IMR-90 (cell line): ENCODE measurements at regions of chr4 and their contacts with region 1.

Region 1: DNA sequence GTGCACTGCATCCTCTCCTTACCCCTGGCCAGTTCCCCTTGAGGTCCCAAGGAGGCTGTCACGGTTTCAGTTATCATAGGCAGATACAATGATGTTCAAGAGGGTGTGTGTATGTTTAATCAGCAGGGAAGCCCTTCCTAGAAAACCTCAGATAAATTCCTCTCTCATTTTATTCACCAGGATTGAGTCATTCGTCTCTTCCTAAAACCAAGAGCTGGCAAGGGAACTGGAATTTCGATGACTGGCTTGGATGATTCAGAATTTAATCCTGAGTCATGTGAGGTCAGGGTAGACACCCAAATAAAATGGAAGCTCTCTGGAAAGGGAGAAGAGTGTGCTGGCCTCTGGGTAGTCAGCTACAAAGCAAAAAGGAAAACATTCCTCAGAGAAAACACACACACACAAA is 106.2 kb upstream of the RAPGEF2 start:
- DNase-seq: peak; percentile 97
- ATAC-seq: peak; percentile 99
- H3K4me3 ChIP-seq: no peak overlapping the region
- H3K27ac ChIP-seq: no peak overlapping the region
- H3K4me1 ChIP-seq: peaks cover 2% of the 10 kb centered on the region
- H3K27me3 ChIP-seq: no peaks in the 10 kb centered on the region
- CTCF ChIP-seq: no peak
- POLR2A ChIP-seq: no peak
- RAD21 ChIP-seq: peak; percentile 29; the same call in 1 of the 2 replicates

Region 2: GRCh38 chr4:158873795-158874401 is 122.8 kb before region 1 on chr4:
- CTCF ChIA-PET with region 1: no interaction called
- POLR2A ChIA-PET with region 1: no interaction called
- dilution Hi-C with region 1: no loop called
- in situ Hi-C with region 1: no loop called
- intact Hi-C with region 1: loop called (anchors 5 kb)
- DNase-seq: peak; percentile 96
- ATAC-seq: peak; percentile 97
- H3K4me3 ChIP-seq: no peak overlapping the region
- H3K27ac ChIP-seq: no peak overlapping the region
- H3K4me1 ChIP-seq: peaks cover 10% of the 10 kb centered on the region
- H3K27me3 ChIP-seq: no peaks in the 10 kb centered on the region
- CTCF ChIP-seq: no peak
- POLR2A ChIP-seq: no peak
- RAD21 ChIP-seq: no peak; the same call in 1 of the 2 replicates

Region 3: DNA sequence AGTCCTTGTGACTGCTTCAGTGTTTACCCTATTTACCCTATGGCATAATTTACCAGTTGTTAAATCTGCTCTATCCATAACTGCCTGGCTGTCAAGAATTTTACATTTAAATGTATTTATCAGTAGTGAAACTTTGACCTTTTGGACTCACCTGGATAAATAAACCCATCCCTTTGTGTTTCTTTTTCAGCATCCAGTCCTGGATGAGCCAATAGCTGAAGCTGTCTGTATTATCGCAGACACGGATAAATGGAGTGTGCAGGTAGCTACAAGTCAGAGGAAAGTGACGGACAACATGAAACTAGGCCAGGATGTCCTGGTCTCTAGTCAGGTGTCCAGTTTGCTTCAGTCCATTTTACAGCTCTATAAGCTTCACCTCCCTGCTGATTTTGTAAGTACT is 105.4 kb before region 1 on chr4:
- CTCF ChIA-PET with region 1: no interaction called
- POLR2A ChIA-PET with region 1: no interaction called
- dilution Hi-C with region 1: no loop called
- in situ Hi-C with region 1: no loop called
- intact Hi-C with region 1: no loop called
- DNase-seq: no peak
- ATAC-seq: no peak
- H3K4me3 ChIP-seq: no peak overlapping the region
- H3K27ac ChIP-seq: no peak overlapping the region
- H3K4me1 ChIP-seq: peaks cover 6% of the 10 kb centered on the region
- H3K27me3 ChIP-seq: no peaks in the 10 kb centered on the region
- CTCF ChIP-seq: no peak
- POLR2A ChIP-seq: no peak
- RAD21 ChIP-seq: no peak

Region 4: DNA sequence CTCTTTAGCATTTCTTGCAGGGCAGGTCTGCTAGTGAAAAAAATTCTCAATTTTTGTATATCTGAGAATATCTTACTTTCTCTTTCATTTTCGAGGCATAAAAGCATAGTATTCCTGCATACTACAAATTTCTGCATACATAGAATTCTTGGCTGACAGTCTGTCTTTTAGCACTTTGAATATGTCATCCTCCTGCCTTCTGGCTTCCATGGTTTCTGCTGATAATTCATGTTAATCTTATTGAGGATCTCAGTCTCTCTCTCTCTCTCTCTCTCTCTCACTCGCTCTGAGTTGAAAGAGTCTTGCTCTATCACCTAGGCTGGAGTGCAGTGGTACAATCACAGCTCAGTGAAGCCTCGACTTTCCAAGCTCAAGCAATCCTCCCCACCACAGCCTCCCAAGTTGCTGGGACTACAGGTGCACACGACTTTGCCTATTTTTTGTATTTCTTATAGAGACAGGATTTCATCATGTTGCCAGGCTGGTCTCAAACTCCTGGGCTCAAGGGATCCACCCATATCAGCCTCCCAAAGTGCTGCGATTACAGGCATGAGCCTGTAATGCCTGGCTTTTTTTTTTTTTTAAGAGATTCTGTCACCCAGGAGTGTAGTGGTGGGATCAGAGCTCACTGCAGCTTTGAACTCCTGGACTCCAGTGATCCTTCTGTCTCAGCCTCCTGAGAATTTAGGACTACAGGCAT is 66.6 kb before region 1 on chr4:
- CTCF ChIA-PET with region 1: no interaction called
- POLR2A ChIA-PET with region 1: no interaction called
- dilution Hi-C with region 1: no loop called
- in situ Hi-C with region 1: no loop called
- intact Hi-C with region 1: loop called (anchors 5 kb)
- DNase-seq: no peak
- ATAC-seq: peak; percentile 37
- H3K4me3 ChIP-seq: peak overlapping the region; percentile 12; the same call in 1 of the 2 replicates
- H3K27ac ChIP-seq: no peak overlapping the region
- H3K4me1 ChIP-seq: 0 out of 2 replicates have a peak, but pooled peaks cover 2% of the 10 kb centered on the region
- H3K27me3 ChIP-seq: no peaks in the 10 kb centered on the region
- CTCF ChIP-seq: no peak
- POLR2A ChIP-seq: no peak
- RAD21 ChIP-seq: no peak

Region 5: DNA sequence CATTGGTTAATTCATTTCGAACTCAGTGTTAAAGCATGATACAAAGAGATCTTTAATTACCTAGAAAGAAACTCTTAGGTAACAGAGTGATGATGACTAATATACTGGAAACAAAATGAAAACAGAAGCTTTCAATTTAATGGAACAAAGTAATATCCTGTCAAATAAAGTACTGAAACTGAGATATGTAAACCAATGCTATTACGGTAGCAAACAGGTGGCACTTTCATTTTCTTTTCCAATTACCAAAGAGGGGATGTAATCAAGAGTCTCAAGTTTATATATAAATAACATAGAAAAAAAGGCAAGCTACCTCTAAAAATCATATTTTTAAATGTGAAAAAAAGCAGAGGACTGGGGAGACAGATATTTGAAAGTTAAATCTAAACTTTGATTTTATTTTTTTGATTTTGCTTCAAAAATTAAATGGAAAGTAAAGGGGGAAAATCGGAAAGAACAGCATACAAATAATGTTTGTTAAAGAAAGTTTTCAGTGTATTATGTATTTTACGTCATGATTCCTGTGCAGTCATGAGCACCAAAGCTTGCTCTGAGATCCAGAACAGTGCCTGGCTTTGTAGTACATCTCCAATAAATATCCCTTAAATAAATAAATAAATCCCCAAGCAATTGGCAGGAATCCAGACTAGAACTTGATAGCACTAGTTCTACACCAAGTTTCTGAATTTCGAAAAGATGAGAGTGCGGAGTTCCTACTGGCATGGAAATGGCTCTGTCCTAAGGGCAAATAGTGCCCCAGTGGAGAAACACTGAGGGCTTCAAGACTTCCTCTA is 81.2 kb after region 1 on chr4:
- CTCF ChIA-PET with region 1: no interaction called
- POLR2A ChIA-PET with region 1: no interaction called
- dilution Hi-C with region 1: no loop called
- in situ Hi-C with region 1: no loop called
- intact Hi-C with region 1: no loop called
- DNase-seq: peak; percentile 11
- ATAC-seq: no peak
- H3K4me3 ChIP-seq: no peak overlapping the region
- H3K27ac ChIP-seq: no peak overlapping the region
- H3K4me1 ChIP-seq: no peaks in the 10 kb centered on the region
- H3K27me3 ChIP-seq: no peaks in the 10 kb centered on the region
- CTCF ChIP-seq: no peak
- POLR2A ChIP-seq: no peak
- RAD21 ChIP-seq: no peak